ENCODE measurements at regions of chr3 and their contacts with region 1.

Region 1: GRCh38 chr3:60053526-60054265 is 1003.9 kb upstream of the CFAP20DC start:
- DNase-seq: peak; percentile 80
- H3K4me3 Mint-ChIP-seq: peak overlapping the region; percentile 32
- H3K27ac Mint-ChIP-seq: peak overlapping the region; percentile 92
- H3K4me1 Mint-ChIP-seq: peaks cover 86% of the 10 kb centered on the region
- H3K27me3 Mint-ChIP-seq: no peaks in the 10 kb centered on the region

Region 2: DNA sequence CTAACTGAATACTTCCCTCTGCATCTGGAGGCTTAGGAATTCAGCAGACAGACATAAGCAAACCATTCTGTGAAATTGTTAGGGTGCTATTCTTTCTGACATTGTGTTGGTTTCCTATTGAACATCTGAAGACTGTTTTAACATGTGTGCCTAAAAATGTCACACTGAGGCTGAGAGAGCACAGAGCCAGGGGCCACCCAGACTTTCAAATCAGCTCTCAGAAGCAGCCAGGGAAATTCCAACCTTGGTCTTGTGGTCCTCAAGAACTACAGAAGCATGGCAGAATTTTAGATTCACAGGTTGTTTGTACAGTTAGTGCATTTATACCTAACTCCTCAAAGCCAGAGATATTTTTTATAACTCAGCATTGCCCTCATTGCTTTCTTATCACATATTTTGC is 74.7 kb before region 1 on chr3:
- CTCF ChIA-PET with region 1: no interaction called
- intact Hi-C with region 1: no loop called
- DNase-seq: peak; percentile 75
- H3K4me3 Mint-ChIP-seq: peak overlapping the region; percentile 39
- H3K27ac Mint-ChIP-seq: peak overlapping the region; percentile 94
- H3K4me1 Mint-ChIP-seq: peaks cover 83% of the 10 kb centered on the region
- H3K27me3 Mint-ChIP-seq: no peaks in the 10 kb centered on the region

Region 3: DNA sequence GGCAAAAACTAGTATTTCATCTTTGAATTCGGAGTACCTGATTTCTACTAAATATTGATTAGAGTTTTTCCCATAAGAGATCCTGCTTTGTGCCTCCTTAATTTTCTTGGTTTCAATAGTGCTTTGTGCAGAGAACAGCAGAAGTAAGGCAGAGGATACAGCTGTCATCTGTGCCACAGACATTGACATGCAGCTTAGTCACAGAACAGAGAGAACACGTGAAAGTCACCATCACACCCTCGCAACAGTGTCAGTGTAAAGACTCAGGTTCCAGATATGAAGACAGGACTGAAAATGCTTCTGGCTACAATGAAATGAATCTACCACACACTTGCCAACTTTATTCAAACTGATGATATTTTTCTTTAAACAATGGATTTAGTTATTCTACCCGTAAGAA is 61.1 kb before region 1 on chr3:
- CTCF ChIA-PET with region 1: no interaction called
- intact Hi-C with region 1: loop called (anchors 2 kb)
- DNase-seq: peak; percentile 76
- H3K4me3 Mint-ChIP-seq: peak overlapping the region; percentile 43
- H3K27ac Mint-ChIP-seq: peak overlapping the region; percentile 84
- H3K4me1 Mint-ChIP-seq: peaks cover 96% of the 10 kb centered on the region
- H3K27me3 Mint-ChIP-seq: no peaks in the 10 kb centered on the region

Region 4: GRCh38 chr3:60025096-60026050 is 28.3 kb before region 1 on chr3:
- CTCF ChIA-PET with region 1: interaction called, 7 read pairs
- intact Hi-C with region 1: loop called (anchors 1 kb)
- DNase-seq: no peak
- H3K4me3 Mint-ChIP-seq: no peak overlapping the region
- H3K27ac Mint-ChIP-seq: peak overlapping the region; percentile 92
- H3K4me1 Mint-ChIP-seq: peaks cover 91% of the 10 kb centered on the region
- H3K27me3 Mint-ChIP-seq: no peaks in the 10 kb centered on the region

Region 5: DNA sequence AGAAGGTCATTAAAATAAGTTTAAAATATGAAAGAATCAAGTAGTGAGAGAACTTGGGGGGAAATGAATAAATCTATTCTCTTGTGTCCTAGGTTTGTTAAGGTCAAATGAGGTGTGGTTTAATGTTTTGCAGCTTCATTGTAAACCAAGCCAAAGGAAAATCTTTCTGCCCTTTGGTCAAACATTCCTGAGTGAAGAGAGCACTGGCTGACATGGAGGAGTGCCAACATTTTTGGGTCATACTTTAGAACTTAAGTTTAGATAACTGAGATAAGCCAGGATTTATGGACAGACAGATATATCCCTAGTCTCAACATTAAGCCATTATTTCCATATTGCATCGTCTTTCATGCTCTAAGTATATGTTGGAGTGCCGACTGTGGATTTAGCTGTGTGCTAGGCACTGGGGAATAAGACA is 1574.1 kb after region 1 on chr3:
- CTCF ChIA-PET with region 1: no interaction called
- intact Hi-C with region 1: no loop called
- DNase-seq: no peak
- H3K4me3 Mint-ChIP-seq: no peak overlapping the region
- H3K27ac Mint-ChIP-seq: no peak overlapping the region
- H3K4me1 Mint-ChIP-seq: no peaks in the 10 kb centered on the region
- H3K27me3 Mint-ChIP-seq: peaks cover 2% of the 10 kb centered on the region